CD4-positive, alpha-beta T cell (primary cell): ENCODE measurements at regions of chr12 and their contacts with region 1.

Region 1: GRCh38 chr12:108193917-108194316 is 64.8 kb downstream of the WSCD2 start:
- DNase-seq: peak in 4 of 14 experiments; percentile 13 to 49 (median 33)
- ATAC-seq: no peak
- H3K4me3 ChIP-seq: no peak overlapping the region
- H3K4me3 Mint-ChIP-seq: no peak overlapping the region
- H3K27ac ChIP-seq: no peak overlapping the region
- H3K27ac Mint-ChIP-seq: no peak overlapping the region
- H3K4me1 ChIP-seq: no peaks in the 10 kb centered on the region
- H3K4me1 Mint-ChIP-seq: no peaks in the 10 kb centered on the region
- H3K27me3 ChIP-seq: no peaks in the 10 kb centered on the region
- H3K27me3 Mint-ChIP-seq: peaks cover 35% of the 10 kb centered on the region
- CTCF ChIP-seq: peak; percentile 57

Region 2: DNA sequence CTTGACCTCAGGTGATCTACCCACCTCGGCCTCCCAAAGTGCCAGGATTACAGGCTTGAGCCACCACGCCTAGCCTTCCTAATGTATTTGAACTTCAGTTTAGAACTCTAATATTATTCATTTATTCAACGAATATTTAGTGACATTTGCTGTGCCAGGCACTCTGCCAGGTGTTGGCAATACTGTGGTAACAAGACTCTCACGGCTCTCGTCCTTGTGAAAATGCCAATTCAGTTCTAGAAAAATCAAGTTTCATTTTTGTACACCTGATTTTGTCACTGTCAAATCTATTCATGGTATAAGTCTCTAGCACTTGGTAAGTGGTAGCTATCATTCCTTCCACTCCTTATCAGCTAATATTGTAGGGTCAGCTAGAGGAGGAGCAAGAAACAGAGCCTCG is 514.6 kb before region 1 on chr12:
- CTCF ChIA-PET with region 1: no interaction called
- POLR2A ChIA-PET with region 1: no interaction called
- intact Hi-C with region 1: loop called in 1 of 2 experiments (anchors 5 kb)
- DNase-seq: no peak
- ATAC-seq: no peak
- H3K4me3 ChIP-seq: no peak overlapping the region
- H3K4me3 Mint-ChIP-seq: no peak overlapping the region
- H3K27ac ChIP-seq: no peak overlapping the region
- H3K27ac Mint-ChIP-seq: no peak overlapping the region
- H3K4me1 ChIP-seq: peaks cover under 1% of the 10 kb centered on the region
- H3K4me1 Mint-ChIP-seq: no peaks in the 10 kb centered on the region
- H3K27me3 ChIP-seq: peaks cover 0 to 3% of the 10 kb centered on the region in 2 experiments
- H3K27me3 Mint-ChIP-seq: peaks cover 17% of the 10 kb centered on the region
- CTCF ChIP-seq: no peak

Region 3: GRCh38 chr12:107992870-107993451 is 201.0 kb before region 1 on chr12:
- CTCF ChIA-PET with region 1: no interaction called
- POLR2A ChIA-PET with region 1: no interaction called
- intact Hi-C with region 1: loop called in 1 of 2 experiments (anchors 5 kb)
- DNase-seq: peak in 3 of 14 experiments; percentile 13 to 21 (median 13)
- ATAC-seq: no peak
- H3K4me3 ChIP-seq: no peak overlapping the region
- H3K4me3 Mint-ChIP-seq: no peak overlapping the region
- H3K27ac ChIP-seq: no peak overlapping the region
- H3K27ac Mint-ChIP-seq: no peak overlapping the region
- H3K4me1 ChIP-seq: no peaks in the 10 kb centered on the region
- H3K4me1 Mint-ChIP-seq: no peaks in the 10 kb centered on the region
- H3K27me3 ChIP-seq: no peaks in the 10 kb centered on the region
- H3K27me3 Mint-ChIP-seq: peaks cover 48% of the 10 kb centered on the region
- CTCF ChIP-seq: no peak

Region 4: GRCh38 chr12:108119126-108119976 is 74.6 kb before region 1 on chr12:
- CTCF ChIA-PET with region 1: no interaction called
- POLR2A ChIA-PET with region 1: no interaction called
- intact Hi-C with region 1: no loop called
- DNase-seq: peak in 1 of 14 experiments; percentile 4
- ATAC-seq: no peak
- H3K4me3 ChIP-seq: no peak overlapping the region
- H3K4me3 Mint-ChIP-seq: no peak overlapping the region
- H3K27ac ChIP-seq: no peak overlapping the region
- H3K27ac Mint-ChIP-seq: no peak overlapping the region
- H3K4me1 ChIP-seq: no peaks in the 10 kb centered on the region
- H3K4me1 Mint-ChIP-seq: no peaks in the 10 kb centered on the region
- H3K27me3 ChIP-seq: peaks cover 0 to 6% of the 10 kb centered on the region in 2 experiments
- H3K27me3 Mint-ChIP-seq: peaks cover 42% of the 10 kb centered on the region
- CTCF ChIP-seq: no peak

Region 5: DNA sequence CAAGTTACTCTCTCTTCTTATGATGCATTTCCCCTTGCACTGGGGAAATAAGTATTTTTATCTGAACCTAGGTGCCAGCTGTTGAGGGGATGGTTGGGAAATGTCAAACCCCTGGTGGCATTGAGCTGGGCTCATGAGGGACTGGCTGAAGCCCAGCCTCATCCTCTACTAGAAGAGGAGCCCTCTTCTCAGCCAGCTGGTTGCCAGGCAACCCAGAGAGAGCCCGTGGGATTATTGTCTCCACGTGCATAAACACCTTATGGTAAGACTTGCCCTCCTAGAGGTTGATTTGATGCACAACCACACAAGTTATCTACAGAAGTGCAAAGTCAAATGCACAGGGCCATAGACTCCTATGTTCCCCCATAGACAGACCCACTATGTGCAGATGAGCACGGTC is 25.0 kb after region 1 on chr12:
- CTCF ChIA-PET with region 1: no interaction called
- POLR2A ChIA-PET with region 1: no interaction called
- intact Hi-C with region 1: no loop called
- DNase-seq: no peak
- ATAC-seq: no peak
- H3K4me3 ChIP-seq: no peak overlapping the region
- H3K4me3 Mint-ChIP-seq: no peak overlapping the region
- H3K27ac ChIP-seq: no peak overlapping the region
- H3K27ac Mint-ChIP-seq: no peak overlapping the region
- H3K4me1 ChIP-seq: no peaks in the 10 kb centered on the region
- H3K4me1 Mint-ChIP-seq: no peaks in the 10 kb centered on the region
- H3K27me3 ChIP-seq: peaks cover 0 to 13% of the 10 kb centered on the region in 2 experiments
- H3K27me3 Mint-ChIP-seq: peaks cover 31% of the 10 kb centered on the region
- CTCF ChIP-seq: no peak